ENCODE measurements at regions of chr5 and their contacts with region 1.

Region 1: GRCh38 chr5:103232393-103232999 is 26.1 kb upstream of the MACIR start:
- DNase-seq: peak; percentile 20
- ATAC-seq: peak; percentile 77
- H3K4me3 Mint-ChIP-seq: no peak overlapping the region
- H3K27ac Mint-ChIP-seq: no peak overlapping the region
- H3K4me1 Mint-ChIP-seq: no peaks in the 10 kb centered on the region
- H3K27me3 Mint-ChIP-seq: peaks cover 8% of the 10 kb centered on the region
- CTCF ChIP-seq: peak; percentile 79

Region 2: DNA sequence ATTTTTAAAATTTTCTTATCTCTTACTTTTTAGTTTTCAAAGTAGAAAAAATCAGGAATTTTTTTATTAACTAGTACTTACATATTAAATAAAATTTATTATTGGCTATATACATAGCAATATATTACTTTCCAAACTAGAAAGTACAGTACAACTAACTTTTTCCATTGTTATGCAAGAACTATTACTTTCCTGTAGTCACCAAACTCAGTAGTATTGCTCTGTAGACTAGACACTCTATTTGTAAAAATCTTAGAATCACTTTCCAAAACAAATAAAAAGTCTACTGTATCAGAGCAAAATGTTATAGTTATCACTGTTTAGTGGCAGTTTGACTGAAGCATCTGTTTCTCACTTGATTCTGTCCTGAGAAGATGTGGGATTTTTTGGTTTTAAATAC is 29.3 kb before region 1 on chr5:
- CTCF ChIA-PET with region 1: no interaction called
- POLR2A ChIA-PET with region 1: no interaction called
- intact Hi-C with region 1: no loop called
- DNase-seq: no peak
- ATAC-seq: no peak
- H3K4me3 Mint-ChIP-seq: no peak overlapping the region
- H3K27ac Mint-ChIP-seq: no peak overlapping the region
- H3K4me1 Mint-ChIP-seq: peaks cover 13% of the 10 kb centered on the region
- H3K27me3 Mint-ChIP-seq: no peaks in the 10 kb centered on the region
- CTCF ChIP-seq: no peak

Region 3: GRCh38 chr5:103475629-103476240 is 243.2 kb after region 1 on chr5:
- CTCF ChIA-PET with region 1: interaction called, 26 read pairs
- POLR2A ChIA-PET with region 1: no interaction called
- intact Hi-C with region 1: loop called (anchors 1 kb)
- DNase-seq: no peak
- ATAC-seq: no peak
- H3K4me3 Mint-ChIP-seq: no peak overlapping the region
- H3K27ac Mint-ChIP-seq: no peak overlapping the region
- H3K4me1 Mint-ChIP-seq: no peaks in the 10 kb centered on the region
- H3K27me3 Mint-ChIP-seq: peaks cover 10% of the 10 kb centered on the region
- CTCF ChIP-seq: peak; percentile 70

Measured in activated CD8-positive, alpha-beta T cell treated with anti-CD3 and anti-CD28 coated beads for 36 hours (primary cell).